Head of caudate nucleus (tissue), 42 donors: ENCODE measurements at regions of chrX and their contacts with region 1.

Region 1: GRCh38 chrX:9708904-9709553 is 56.6 kb downstream of the GPR143 start:
- DNase-seq: peak; percentile 58 to 90 (median 81)

Region 2: GRCh38 chrX:8815464-8816065 is 893.5 kb before region 1 on chrX:
- intact Hi-C with region 1: loop called (anchors 5 kb)
- DNase-seq: peak in 12 of 42 donors; percentile 13 to 56 (median 34)

Region 3: DNA sequence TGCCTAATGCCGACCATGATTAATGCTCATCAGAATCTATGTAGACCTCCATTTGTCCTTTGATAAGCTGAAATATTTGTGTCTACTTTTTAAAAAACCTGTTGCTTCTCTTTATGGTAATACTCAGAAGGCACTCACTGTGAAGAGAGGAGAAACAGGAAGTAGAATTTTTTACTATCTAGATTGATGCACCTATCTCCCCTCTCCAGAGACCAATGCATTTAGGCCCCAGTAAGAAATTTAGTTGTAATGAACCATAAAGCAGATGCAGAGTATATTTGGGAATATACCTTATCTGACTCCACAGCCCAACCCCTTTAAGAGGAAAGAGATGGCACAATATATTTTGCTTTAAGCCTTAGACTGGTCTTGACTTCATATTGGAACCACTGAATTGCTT is 233.0 kb before region 1 on chrX:
- intact Hi-C with region 1: loop called (anchors 10 kb)
- DNase-seq: no peak